HEK293T (cell line): ENCODE measurements at regions of chr1 and their contacts with region 1.

Region 1: DNA sequence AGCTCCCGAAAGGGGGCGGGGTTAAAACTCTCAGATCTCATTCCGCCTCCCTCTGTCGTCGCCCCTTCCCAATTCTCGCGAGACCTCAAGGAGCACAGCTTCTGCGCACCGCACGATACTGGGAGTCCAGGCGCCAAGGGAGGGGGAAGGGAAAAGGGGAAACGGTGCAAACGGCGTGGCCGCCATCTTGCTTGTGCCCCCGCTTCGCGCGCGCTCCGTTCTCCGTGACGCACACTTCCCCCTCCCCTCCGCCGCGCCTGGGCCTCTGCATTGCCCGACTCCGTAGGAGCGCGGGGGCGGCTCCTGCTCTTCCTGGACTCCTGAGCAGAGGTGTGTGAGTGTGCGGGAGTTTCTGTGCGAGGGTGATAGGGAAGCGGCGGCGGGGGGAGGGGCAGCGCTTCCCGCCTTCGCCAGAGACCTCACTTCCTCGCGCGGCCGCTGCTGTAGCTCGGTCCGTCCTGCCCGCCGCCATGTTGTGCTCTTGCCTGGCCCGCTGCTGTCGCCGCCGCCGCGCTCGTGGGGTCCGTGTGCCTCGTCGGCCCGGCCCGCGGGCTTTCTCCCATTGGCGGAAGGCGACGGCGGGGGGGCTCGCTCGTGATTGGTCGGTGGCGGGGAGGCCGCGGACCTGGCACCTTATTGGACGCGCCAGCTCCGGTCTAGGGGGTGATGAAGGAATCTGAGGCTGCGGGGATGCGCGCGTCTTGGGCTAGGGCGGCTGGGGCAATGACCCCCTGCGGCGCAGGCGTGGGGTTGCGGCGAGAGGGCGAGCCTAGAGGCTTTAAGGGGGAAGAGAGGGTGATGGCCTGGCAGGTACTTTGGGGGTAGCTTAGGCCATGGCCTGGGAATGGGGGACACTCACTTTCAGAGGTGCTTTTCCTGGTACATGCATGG is at the start of gene NFYC:
- DNase-seq: peak; percentile 96

Region 2: DNA sequence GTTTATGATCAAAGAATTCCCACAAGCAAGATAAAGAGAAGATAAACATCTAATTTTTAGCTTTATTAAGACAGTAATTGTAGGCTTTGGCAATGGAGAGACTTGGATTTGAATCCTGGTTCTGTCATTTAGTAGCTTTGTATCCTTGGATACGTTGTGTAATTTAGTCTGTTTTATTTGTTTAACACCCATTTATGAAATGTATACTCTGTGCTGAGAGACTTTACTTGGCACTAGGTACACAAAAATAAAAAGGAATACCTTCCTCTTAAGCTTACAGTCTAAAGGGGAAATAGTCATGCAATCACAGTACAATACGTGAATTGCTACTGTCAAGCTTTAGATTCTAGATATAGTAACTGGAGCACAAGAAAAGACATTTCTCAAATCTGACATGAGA is 409.9 kb before region 1 on chr1:
- CTCF ChIA-PET with region 1: no interaction called
- POLR2A ChIA-PET with region 1: no interaction called
- DNase-seq: no peak

Region 3: DNA sequence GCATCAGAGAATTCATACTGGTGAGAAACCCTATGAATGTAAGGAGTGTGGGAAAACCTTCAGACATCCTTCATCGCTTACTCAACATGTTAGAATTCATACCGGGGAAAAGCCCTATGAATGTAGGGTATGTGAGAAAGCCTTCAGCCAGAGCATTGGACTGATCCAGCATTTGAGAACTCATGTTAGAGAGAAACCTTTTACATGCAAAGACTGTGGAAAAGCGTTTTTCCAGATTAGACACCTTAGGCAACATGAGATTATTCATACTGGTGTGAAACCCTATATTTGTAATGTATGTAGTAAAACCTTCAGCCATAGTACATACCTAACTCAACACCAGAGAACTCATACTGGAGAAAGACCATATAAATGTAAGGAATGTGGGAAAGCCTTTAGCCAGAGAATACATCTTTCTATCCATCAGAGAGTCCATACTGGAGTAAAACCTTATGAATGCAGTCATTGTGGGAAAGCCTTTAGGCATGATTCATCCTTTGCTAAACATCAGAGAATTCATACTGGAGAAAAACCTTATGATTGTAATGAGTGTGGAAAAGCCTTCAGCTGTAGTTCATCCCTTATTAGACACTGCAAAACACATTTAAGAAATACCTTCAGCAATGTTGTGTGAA is 228.7 kb before region 1 on chr1:
- CTCF ChIA-PET with region 1: no interaction called
- POLR2A ChIA-PET with region 1: no interaction called
- DNase-seq: no peak

Region 4: GRCh38 chr1:40668769-40669525 is 22.8 kb before region 1 on chr1:
- CTCF ChIA-PET with region 1: interaction called, 12 read pairs
- POLR2A ChIA-PET with region 1: interaction called, 32 read pairs
- DNase-seq: peak; percentile 82

Region 5: DNA sequence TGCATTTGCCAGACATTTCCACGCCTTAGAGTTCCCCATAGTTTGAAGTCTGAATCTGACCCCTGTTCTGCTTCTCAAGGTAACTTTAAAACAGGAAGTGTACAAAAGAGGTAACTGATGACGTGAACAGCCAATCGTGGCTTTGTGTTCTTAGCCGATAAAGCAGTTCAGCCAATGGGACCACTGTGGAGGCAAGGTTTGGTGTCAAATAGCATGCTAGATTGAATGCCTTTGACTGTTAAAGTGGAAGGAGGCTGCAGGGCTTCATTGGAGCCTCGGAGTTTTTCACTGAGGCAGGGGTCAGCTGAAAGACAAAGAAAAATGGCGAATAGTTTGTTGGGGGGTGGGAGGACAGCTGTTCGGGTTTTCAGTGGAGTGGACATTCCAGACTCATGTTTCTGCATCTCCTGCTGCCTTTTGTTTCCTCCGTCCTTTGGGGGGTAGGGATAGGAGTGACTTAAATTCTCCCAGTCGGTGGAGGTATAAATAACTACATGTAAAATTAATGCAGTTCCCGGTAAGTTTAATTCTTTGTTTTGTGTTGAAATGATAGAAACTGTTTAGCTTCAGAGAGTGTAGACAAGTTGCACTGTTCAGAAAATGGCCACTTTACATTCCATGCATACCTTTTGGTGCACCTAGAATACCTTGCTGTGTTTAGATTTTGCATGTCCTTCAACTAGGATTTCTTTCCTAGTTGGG is 17.5 kb after region 1 on chr1:
- CTCF ChIA-PET with region 1: interaction called, 4 read pairs
- POLR2A ChIA-PET with region 1: interaction called, 83 read pairs
- DNase-seq: peak; percentile 83

Region 6: GRCh38 chr1:40745176-40745575 is 53.4 kb after region 1 on chr1:
- CTCF ChIA-PET with region 1: no interaction called
- POLR2A ChIA-PET with region 1: interaction called, 10 read pairs
- DNase-seq: no peak

Region 7: DNA sequence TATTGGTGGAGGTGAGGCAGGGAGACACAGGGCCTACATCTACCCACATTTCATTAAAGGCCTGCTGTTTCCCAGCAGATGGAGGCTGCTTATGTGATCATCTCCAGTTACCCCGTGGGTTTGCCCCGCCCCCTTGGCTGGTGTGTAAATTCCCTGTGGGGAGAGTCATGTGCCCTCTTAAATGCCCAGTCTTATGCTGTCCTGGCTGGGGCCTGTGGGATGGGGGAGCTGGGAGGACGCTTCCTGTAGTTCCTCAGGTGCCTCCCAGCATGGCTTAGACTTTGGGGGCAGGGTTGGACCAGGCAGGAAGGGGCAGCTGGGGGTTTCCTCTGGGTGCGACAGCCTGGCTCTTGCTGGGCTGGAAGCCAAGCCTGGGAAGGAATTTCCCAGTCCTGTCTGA is 185.9 kb after region 1 on chr1:
- CTCF ChIA-PET with region 1: no interaction called
- POLR2A ChIA-PET with region 1: no interaction called
- DNase-seq: no peak

Region 8: DNA sequence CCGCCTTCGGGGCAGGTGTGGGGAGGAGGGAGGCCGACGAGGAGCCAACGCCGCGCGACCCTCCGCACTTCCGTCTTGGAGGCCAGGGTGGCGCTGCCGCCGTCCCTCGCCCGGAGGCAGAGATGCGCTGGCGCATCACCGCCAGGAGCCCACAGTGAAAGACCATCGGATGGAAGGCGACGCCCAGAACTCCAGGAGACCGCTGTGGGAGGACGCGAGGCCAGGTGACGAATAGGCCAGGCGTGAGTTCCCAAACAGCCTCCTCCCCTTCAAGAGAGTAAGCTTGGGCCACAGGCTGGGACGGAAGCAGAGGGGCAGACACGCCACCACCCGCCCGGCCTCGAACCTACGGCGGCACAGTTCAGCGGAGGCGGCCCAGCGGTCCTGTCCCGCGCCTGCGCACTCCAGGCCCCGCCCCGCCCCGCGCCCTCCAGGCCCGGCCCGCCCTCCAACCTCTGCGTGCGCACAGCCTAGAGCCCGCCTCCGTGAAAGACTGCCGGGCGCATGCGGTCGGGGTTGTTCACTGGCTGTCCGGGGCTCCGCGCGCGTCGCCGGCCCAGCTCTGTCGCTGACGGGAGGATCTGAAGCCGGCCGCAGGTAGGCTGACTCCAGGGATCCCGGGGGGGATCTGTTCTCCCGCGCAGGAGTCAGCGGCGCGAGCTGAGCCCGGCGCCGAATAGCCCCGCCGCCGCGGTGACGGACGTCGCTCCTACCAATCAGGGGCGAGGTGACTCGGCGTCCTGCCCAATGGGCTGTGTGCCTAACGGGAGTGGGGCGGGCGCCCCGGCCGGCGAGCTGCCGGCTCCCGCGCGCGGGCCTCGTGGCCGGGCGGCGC is 287.7 kb after region 1 on chr1 and contains the start of gene CTPS1:
- CTCF ChIA-PET with region 1: no interaction called
- POLR2A ChIA-PET with region 1: interaction called, 14 read pairs
- DNase-seq: peak; percentile 96